Right ventricle myocardium inferior (tissue), 1 donor: ENCODE measurements at regions of chr1 and their contacts with region 1.

Region 1: GRCh38 chr1:155277070-155277895 is at the start of gene HCN3:
- DNase-seq: peak; percentile 98
- ATAC-seq: peak; percentile 91
- total RNA-seq, gene HCN3: 1.8 TPM

Region 2: DNA sequence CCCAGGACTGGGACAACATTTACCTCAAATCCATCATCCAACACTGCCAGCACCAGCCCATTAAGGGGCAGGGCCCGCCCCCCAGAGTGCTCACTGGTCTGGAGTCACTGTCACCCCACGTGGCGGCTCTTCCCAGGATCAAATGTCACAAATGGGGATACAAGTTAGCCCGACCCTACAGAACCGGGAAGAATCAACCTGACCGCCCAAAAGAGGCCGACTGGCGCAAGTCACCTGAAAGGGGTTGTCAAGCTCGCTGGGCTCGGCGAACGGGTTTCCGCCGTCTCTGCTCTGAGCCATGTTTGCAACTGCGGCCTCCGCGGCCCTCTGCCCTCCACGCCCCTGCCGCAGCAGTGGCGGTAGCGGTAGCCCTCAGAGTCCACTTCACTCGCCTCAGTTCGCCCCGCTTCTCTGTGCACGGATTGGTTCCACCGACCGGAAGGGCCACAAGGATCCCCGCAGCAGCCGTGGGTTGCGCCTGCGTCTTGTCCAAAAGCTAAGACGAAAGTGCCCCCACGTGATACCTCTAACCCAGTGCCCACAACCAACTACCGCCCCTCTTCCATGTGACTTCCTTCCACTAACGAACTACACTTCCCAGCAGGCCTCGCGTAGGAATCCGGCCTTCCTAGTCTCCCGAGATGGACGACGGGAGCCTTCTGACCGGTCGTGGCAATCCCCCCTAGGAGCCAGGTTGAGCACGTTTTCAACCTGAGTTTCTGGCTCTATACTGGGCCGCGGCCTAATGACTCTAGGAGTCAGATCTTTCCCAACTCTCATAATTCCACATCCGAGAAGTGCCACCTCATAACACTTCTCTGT is 15.2 kb before region 1 on chr1 and contains the start of gene SCAMP3:
- intact Hi-C with region 1: loop called (anchors 1 kb)
- DNase-seq: peak; percentile 96
- ATAC-seq: peak; percentile 98
- total RNA-seq, gene SCAMP3: 55.4 TPM

Region 3: GRCh38 chr1:155295183-155295941 is 18.1 kb after region 1 on chr1:
- intact Hi-C with region 1: no loop called
- DNase-seq: no peak
- ATAC-seq: peak; percentile 30

Region 4: DNA sequence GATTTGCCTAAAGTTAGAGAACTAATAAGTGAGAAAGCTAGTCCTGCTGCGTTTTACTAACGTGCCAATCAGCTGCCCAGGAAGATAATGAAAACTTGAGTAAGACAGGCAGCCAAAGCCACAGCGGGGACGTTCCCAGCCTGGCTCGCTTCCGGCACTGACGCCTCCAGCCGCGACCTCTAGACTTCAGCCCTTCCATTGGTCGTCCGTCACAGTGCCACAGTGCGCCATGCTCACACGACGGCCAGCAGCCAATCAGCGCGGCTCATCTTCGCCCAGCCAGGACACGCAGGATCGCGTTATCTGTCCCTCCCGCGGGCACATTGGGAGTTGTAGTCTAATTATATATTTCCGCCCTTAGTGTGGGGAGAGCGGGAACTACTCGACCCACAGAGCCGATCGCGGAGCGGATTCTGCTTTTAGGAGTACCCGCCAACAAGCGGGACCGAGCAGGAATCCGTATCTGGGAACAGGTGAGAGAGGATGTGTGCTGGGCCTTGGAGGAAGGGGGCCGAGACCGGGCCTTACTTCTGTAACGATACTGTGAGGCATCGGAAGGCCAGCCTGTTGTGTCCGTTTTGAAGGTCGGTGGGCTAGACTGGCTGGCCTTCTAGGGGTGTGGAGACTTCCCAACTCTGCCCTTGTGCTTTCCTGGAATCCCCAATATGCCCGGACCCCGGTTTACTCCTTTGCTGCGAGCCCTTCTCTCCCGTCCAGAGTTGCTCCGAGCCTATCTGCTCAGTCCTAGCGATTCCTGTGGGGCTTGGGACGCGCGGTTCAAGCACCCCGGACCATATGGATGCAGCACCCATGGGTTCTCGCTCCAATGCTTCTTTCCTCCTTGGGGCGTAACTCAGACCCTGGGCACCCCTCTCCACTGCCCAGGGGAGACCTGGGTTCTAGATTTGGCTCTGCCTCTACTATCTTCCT is 31.5 kb after region 1 on chr1 and contains the start of gene FDPS:
- intact Hi-C with region 1: loop called (anchors 1 kb)
- DNase-seq: peak; percentile 99
- ATAC-seq: peak; percentile 100
- total RNA-seq, gene FDPS: 80.0 TPM

Region 5: GRCh38 chr1:155479205-155479604 is 201.9 kb after region 1 on chr1:
- intact Hi-C with region 1: no loop called
- DNase-seq: no peak
- ATAC-seq: no peak